ENCODE measurements at regions of chr3 and their contacts with region 1.

Region 1: GRCh38 chr3:198080521-198081280 is 120.7 kb downstream of the LMLN start:
- DNase-seq: peak; percentile 78 to 84 (median 79)
- H3K4me3 ChIP-seq: peak overlapping the region; percentile 36 to 44
- H3K4me3 Mint-ChIP-seq: peak overlapping the region; percentile 69 to 81 (median 79)
- H3K27ac ChIP-seq: no peak overlapping the region
- H3K27ac Mint-ChIP-seq: peak overlapping the region in 3 of 7 donors; percentile 53 to 74 (median 56)
- H3K4me1 ChIP-seq: peaks cover 12% of the 10 kb centered on the region
- H3K4me1 Mint-ChIP-seq: peaks cover 0 to 6% (median 2%) of the 10 kb centered on the region in 4 donors
- H3K27me3 ChIP-seq: peaks cover 10% of the 10 kb centered on the region
- H3K27me3 Mint-ChIP-seq: peaks cover 19 to 24% of the 10 kb centered on the region in 2 donors

Region 2: DNA sequence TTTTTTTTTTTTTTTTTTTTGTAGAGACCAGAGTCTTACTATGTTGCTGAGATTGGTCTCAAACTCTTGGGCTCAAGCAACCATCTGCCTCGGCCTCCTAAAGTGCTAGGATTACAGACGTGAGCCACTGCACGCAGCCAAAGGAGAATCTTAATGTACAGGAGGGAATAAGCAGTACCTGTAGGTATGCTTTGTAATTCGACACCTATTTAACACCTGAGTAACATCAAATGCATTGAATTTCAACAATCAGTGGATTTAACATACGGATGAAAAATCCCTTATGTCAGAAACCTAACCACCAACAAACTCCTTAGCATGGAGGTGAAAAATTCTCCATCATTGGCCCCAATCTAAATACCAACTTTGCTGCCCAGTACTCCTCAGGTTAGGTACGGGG is 355.2 kb before region 1 on chr3:
- CTCF ChIA-PET with region 1: no interaction called
- POLR2A ChIA-PET with region 1: no interaction called
- intact Hi-C with region 1: no loop called
- DNase-seq: no peak
- H3K4me3 ChIP-seq: no peak overlapping the region
- H3K4me3 Mint-ChIP-seq: no peak overlapping the region
- H3K27ac ChIP-seq: no peak overlapping the region
- H3K27ac Mint-ChIP-seq: no peak overlapping the region
- H3K4me1 ChIP-seq: peaks cover 5% of the 10 kb centered on the region
- H3K4me1 Mint-ChIP-seq: peaks cover 16 to 30% (median 21%) of the 10 kb centered on the region in 4 donors
- H3K27me3 ChIP-seq: no peaks in the 10 kb centered on the region
- H3K27me3 Mint-ChIP-seq: no peaks in the 10 kb centered on the region

Region 3: GRCh38 chr3:198093112-198093679 is 12.5 kb after region 1 on chr3:
- CTCF ChIA-PET with region 1: interaction called, 12 read pairs
- POLR2A ChIA-PET with region 1: interaction called, 3 read pairs
- intact Hi-C with region 1: no loop called
- DNase-seq: no peak
- H3K4me3 ChIP-seq: no peak overlapping the region
- H3K4me3 Mint-ChIP-seq: no peak overlapping the region
- H3K27ac ChIP-seq: no peak overlapping the region
- H3K27ac Mint-ChIP-seq: no peak overlapping the region
- H3K4me1 ChIP-seq: no peaks in the 10 kb centered on the region
- H3K4me1 Mint-ChIP-seq: no peaks in the 10 kb centered on the region
- H3K27me3 ChIP-seq: peaks cover 3% of the 10 kb centered on the region
- H3K27me3 Mint-ChIP-seq: peaks cover 19 to 23% of the 10 kb centered on the region in 2 donors